Naive thymus-derived CD4-positive, alpha-beta T cell (primary cell): ENCODE measurements at regions of chr10 and their contacts with region 1.

Region 1: DNA sequence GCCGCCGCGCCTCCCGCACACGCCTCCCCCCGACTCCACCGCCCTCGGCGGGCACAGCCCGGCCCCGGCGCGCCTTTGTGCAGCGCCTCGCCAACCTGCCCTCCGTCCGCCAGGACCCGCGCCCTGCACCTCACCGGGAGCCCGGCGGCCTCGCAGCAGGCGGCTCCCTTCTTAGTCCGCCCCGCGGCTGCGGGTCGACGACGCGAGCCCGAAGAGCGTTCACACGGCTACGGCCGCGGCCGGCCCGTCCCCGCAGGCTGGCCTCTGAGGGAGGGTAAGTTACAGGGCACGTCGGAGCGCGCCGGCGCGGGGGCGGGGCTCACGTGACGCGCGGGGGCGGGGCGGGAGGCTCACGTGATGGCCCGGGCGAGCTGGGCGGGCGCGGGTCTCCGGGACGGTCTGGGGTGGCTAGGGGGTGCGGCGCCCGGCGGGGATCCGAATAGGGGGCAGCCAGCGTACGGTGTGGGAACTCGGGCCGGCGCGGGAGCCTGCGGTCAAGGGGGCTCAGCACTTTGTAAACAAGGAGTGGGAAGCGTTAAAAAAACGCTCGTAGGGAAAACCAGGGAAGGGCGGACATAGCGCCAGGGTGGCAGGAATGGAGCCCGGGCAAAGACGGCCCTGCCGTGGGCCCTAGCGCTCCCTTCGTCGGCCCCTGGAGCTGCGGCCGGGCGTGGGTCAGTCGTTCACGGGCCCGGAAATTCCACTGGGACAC is at the start of gene ARHGAP12:
- DNase-seq: peak; percentile 76 to 90 (median 85)
- ATAC-seq: peak; percentile 87
- H3K4me3 ChIP-seq: peak within 1 kb of the TSS; percentile 90
- H3K4me3 Mint-ChIP-seq: peak within 1 kb of the TSS; percentile 73 to 95 (median 92)
- H3K27ac ChIP-seq: peak within 1 kb of the TSS; percentile 84
- H3K27ac Mint-ChIP-seq: peak within 1 kb of the TSS; percentile 66 to 93 (median 86)
- H3K4me1 ChIP-seq: peaks cover 10% of the 10 kb centered on the region in 2 donors
- H3K4me1 Mint-ChIP-seq: peaks cover 30 to 51% (median 47%) of the 10 kb centered on the region in 7 donors
- H3K27me3 ChIP-seq: no peaks in the 10 kb centered on the region
- H3K27me3 Mint-ChIP-seq: peaks cover 0 to 9% (median 0%) of the 10 kb centered on the region in 5 donors
- total RNA-seq, gene ARHGAP12: 10.6 to 34.6 (median 31.4) TPM

Region 2: DNA sequence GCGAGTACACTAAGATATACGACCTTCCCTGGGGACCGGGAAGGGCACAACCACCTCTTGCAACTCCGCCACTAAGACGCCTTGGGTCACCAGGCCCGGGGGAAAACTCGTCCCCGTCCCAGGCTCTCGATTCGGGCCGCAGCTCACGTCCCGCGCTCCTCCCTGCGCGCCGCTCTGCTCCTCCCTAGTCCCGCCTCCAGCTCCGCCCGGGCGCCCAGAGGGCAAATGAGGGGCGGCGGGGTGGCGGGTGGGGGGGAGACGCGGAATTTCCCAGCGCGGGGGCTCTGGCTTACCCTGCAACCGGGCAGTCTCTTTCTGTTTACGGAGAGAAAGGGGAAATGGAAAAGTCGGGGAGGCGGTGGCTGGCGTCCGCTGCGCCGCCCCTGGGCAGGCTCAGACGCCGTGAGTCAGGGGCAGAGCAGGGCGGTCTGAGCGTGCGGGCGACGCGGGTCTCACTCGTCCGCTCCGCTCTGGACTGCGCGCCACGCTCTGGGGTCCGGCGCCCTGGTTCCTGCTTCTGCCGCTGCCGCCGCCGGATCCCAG is 1494.9 kb before region 1 on chr10 and contains the start of gene MAP3K8:
- CTCF ChIA-PET with region 1: no interaction called
- POLR2A ChIA-PET with region 1: no interaction called
- intact Hi-C with region 1: loop called in 1 of 2 experiments (anchors 10 kb)
- DNase-seq: peak; percentile 52 to 92 (median 59)
- ATAC-seq: peak; percentile 86
- H3K4me3 ChIP-seq: peak within 1 kb of the TSS; percentile 69
- H3K4me3 Mint-ChIP-seq: peak within 1 kb of the TSS; percentile 82 to 93 (median 89)
- H3K27ac ChIP-seq: peak within 1 kb of the TSS; percentile 68
- H3K27ac Mint-ChIP-seq: peak within 1 kb of the TSS; percentile 23 to 94 (median 70)
- H3K4me1 ChIP-seq: peaks cover 21 to 22% of the 10 kb centered on the region in 2 donors
- H3K4me1 Mint-ChIP-seq: peaks cover 37 to 62% (median 46%) of the 10 kb centered on the region in 7 donors
- H3K27me3 ChIP-seq: no peaks in the 10 kb centered on the region
- H3K27me3 Mint-ChIP-seq: no peaks in the 10 kb centered on the region
- total RNA-seq, gene MAP3K8: 0.70 to 102 (median 31.2) TPM

Region 3: GRCh38 chr10:31031558-31032257 is 897.0 kb before region 1 on chr10 and contains the start of gene ZNF438:
- CTCF ChIA-PET with region 1: no interaction called
- POLR2A ChIA-PET with region 1: no interaction called
- intact Hi-C with region 1: loop called (anchors 1 to 5 kb)
- DNase-seq: peak; percentile 93 to 99 (median 96)
- ATAC-seq: peak; percentile 92
- H3K4me3 ChIP-seq: peak within 1 kb of the TSS; percentile 84
- H3K4me3 Mint-ChIP-seq: peak within 1 kb of the TSS; percentile 89 to 94 (median 92)
- H3K27ac ChIP-seq: peak within 1 kb of the TSS; percentile 96
- H3K27ac Mint-ChIP-seq: peak within 1 kb of the TSS; percentile 93 to 99 (median 99)
- H3K4me1 ChIP-seq: peaks cover 5% of the 10 kb centered on the region in 2 donors
- H3K4me1 Mint-ChIP-seq: peaks cover 7 to 34% (median 14%) of the 10 kb centered on the region in 7 donors
- H3K27me3 ChIP-seq: no peaks in the 10 kb centered on the region
- H3K27me3 Mint-ChIP-seq: no peaks in the 10 kb centered on the region
- total RNA-seq, gene ZNF438: 3.9 to 5.8 (median 4.0) TPM

Region 4: DNA sequence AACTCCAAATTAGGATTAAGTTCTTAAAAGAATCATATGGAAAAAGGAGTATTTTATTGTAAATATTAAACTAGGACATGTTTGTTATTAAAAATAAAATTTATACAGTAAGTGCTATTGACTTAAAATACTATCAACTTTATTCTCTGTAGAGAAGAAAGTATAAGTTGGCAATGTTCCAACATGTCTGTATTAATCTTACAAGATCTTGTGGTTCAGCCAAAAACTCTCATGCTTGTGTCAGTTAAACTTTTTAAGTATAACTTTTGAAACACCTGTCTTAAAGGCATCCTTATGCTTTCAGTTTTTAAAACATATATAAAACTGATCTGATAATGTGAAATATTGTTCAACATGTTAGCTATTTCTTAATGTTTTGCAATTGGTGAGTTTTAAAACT is 449.0 kb before region 1 on chr10:
- CTCF ChIA-PET with region 1: no interaction called
- POLR2A ChIA-PET with region 1: no interaction called
- intact Hi-C with region 1: no loop called
- DNase-seq: peak in 5 of 9 donors; percentile 8 to 39 (median 27)
- ATAC-seq: no peak
- H3K4me3 ChIP-seq: no peak overlapping the region
- H3K4me3 Mint-ChIP-seq: no peak overlapping the region
- H3K27ac ChIP-seq: no peak overlapping the region
- H3K27ac Mint-ChIP-seq: no peak overlapping the region
- H3K4me1 ChIP-seq: peaks cover 0 to 7% of the 10 kb centered on the region in 2 donors
- H3K4me1 Mint-ChIP-seq: peaks cover 0 to 44% (median 41%) of the 10 kb centered on the region in 7 donors
- H3K27me3 ChIP-seq: no peaks in the 10 kb centered on the region
- H3K27me3 Mint-ChIP-seq: no peaks in the 10 kb centered on the region

Region 5: DNA sequence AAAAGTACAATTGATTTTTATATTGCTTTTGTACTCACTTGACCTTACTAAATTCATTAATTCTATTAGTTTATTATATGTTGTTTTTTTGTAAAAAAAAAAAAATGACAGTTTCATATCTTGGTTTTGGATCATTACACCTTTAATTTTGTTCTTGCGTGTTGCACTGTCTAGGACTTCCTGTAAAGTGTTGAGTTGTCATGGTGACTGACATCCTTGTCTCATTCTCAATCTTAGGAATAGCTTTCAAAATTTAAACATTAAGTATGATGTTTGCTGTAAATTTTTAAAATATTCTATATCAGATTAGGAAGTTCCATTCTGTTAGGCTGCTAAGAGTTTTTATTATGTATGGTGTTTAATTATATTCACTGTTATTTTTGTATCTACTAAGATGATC is 139.1 kb before region 1 on chr10:
- CTCF ChIA-PET with region 1: no interaction called
- POLR2A ChIA-PET with region 1: no interaction called
- intact Hi-C with region 1: no loop called
- DNase-seq: peak in 4 of 9 donors; percentile 11 to 30 (median 20)
- ATAC-seq: peak; percentile 74
- H3K4me3 ChIP-seq: no peak overlapping the region
- H3K4me3 Mint-ChIP-seq: no peak overlapping the region
- H3K27ac ChIP-seq: no peak overlapping the region
- H3K27ac Mint-ChIP-seq: no peak overlapping the region
- H3K4me1 ChIP-seq: peaks cover 0 to 3% of the 10 kb centered on the region in 2 donors
- H3K4me1 Mint-ChIP-seq: peaks cover 3 to 15% (median 11%) of the 10 kb centered on the region in 7 donors
- H3K27me3 ChIP-seq: peaks cover 0 to 4% of the 10 kb centered on the region in 2 donors
- H3K27me3 Mint-ChIP-seq: peaks cover 5 to 21% (median 10%) of the 10 kb centered on the region in 5 donors

Region 6: DNA sequence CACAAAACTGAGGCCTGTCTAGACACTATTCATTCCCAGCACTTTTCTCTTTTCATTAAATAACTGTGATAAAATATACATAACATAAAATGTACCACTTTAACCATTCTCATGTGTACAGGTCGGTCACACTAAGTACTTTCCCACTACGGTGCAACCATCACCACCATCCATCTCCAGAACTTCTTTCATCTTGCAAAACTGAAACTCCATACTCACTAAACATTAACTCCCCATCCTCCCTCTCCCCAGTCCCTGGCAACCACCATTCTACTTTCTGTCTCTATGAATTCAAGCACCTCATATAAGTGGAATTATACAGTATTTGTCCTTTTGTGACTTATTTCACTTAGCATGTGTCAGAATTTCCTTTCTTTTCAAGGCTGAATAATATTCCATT is 53.1 kb before region 1 on chr10:
- CTCF ChIA-PET with region 1: interaction called, 3 read pairs
- POLR2A ChIA-PET with region 1: no interaction called
- intact Hi-C with region 1: loop called in 1 of 2 experiments (anchors 5 kb)
- DNase-seq: no peak
- ATAC-seq: no peak
- H3K4me3 ChIP-seq: no peak overlapping the region
- H3K4me3 Mint-ChIP-seq: no peak overlapping the region
- H3K27ac ChIP-seq: no peak overlapping the region
- H3K27ac Mint-ChIP-seq: peak overlapping the region in 1 of 9 donors; percentile 27
- H3K4me1 ChIP-seq: no peaks in the 10 kb centered on the region
- H3K4me1 Mint-ChIP-seq: peaks cover 14 to 55% (median 26%) of the 10 kb centered on the region in 7 donors
- H3K27me3 ChIP-seq: no peaks in the 10 kb centered on the region
- H3K27me3 Mint-ChIP-seq: no peaks in the 10 kb centered on the region

Region 7: DNA sequence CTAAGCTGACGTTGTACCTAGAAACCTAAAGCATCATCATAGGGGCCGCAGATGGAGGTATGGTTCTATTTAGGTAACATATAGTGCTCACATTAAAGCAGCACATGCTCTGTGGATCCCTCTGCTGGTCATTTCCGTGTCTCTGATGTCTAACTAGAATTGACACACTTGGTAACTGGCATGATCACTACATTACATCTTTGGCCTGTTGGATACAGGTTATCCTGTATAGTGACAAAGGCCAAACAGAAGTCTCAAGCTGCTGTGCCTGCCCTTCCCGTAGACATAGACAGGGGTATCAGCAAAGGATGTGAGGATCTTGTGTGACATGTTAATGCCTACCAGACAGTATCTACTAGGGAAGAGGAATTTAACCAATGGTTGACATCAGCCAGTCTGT is 76.3 kb after region 1 on chr10:
- CTCF ChIA-PET with region 1: interaction called, 3 read pairs
- POLR2A ChIA-PET with region 1: no interaction called
- intact Hi-C with region 1: loop called (anchors 1 to 2 kb)
- DNase-seq: peak in 7 of 9 donors; percentile 27 to 46 (median 40)
- ATAC-seq: peak; percentile 79
- H3K4me3 ChIP-seq: no peak overlapping the region
- H3K4me3 Mint-ChIP-seq: no peak overlapping the region
- H3K27ac ChIP-seq: no peak overlapping the region
- H3K27ac Mint-ChIP-seq: peak overlapping the region in 4 of 9 donors; percentile 36 to 85 (median 76)
- H3K4me1 ChIP-seq: no peaks in the 10 kb centered on the region
- H3K4me1 Mint-ChIP-seq: peaks cover 0 to 20% (median 13%) of the 10 kb centered on the region in 7 donors
- H3K27me3 ChIP-seq: no peaks in the 10 kb centered on the region
- H3K27me3 Mint-ChIP-seq: no peaks in the 10 kb centered on the region

Region 8: GRCh38 chr10:33134011-33134751 is 1205.5 kb after region 1 on chr10:
- CTCF ChIA-PET with region 1: no interaction called
- POLR2A ChIA-PET with region 1: no interaction called
- intact Hi-C with region 1: loop called in 1 of 2 experiments (anchors 5 kb)
- DNase-seq: peak in 2 of 9 donors; percentile 61 to 64
- ATAC-seq: peak; percentile 58
- H3K4me3 ChIP-seq: no peak overlapping the region
- H3K4me3 Mint-ChIP-seq: peak overlapping the region in 2 of 10 donors; percentile 27 to 50
- H3K27ac ChIP-seq: no peak overlapping the region
- H3K27ac Mint-ChIP-seq: peak overlapping the region in 8 of 9 donors; percentile 54 to 95 (median 82)
- H3K4me1 ChIP-seq: peaks cover 35 to 85% of the 10 kb centered on the region in 2 donors
- H3K4me1 Mint-ChIP-seq: peaks cover 25 to 78% (median 57%) of the 10 kb centered on the region in 7 donors
- H3K27me3 ChIP-seq: no peaks in the 10 kb centered on the region
- H3K27me3 Mint-ChIP-seq: no peaks in the 10 kb centered on the region